ENCODE measurements at regions of chr3 and their contacts with region 1.

Region 1: DNA sequence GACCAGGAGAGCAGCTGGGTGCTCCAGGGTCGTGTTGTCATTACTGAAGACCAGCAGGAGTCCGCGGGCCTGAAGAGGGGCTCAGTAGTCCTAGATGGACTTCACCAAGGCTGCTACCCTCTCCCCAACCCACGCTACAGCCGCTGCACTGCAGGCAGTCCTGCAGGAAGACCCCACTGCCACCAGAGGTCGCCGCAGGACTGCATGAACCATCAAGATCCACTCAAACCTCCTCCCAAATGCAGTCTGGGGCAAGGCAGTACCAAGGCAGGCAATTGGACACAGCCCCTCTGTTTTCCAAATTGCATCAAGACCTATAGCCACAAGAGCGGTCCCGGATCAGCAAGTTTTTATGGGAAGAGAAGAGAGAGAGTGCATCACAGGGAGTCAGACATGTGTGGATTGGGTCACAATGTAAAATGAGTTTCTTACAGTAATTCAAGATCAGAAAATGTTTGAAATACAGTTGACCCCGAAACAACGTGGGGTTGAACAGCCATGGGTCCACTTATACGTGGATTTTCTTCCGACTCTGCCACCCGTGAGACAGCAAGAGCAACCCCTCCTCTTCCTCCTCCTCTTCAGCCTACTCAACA is 46.7 kb downstream of the DZIP1L start:
- DNase-seq: peak; percentile 47 to 53
- ATAC-seq: peak; percentile 77 to 85
- H3K4me3 ChIP-seq: no peak overlapping the region
- H3K27ac ChIP-seq: no peak overlapping the region
- H3K4me1 ChIP-seq: no peaks in the 10 kb centered on the region
- H3K27me3 ChIP-seq: no peaks in the 10 kb centered on the region
- CTCF ChIP-seq: peak; percentile 84 to 94 (median 91)
- POLR2A ChIP-seq: no peak

Region 2: GRCh38 chr3:138118612-138119422 is 50.1 kb after region 1 on chr3:
- in situ Hi-C with region 1: loop called (anchors 5 to 10 kb)
- intact Hi-C with region 1: loop called (anchors 1 kb)
- DNase-seq: peak; percentile 35 to 62
- ATAC-seq: peak; percentile 63 to 74
- H3K4me3 ChIP-seq: no peak overlapping the region
- H3K27ac ChIP-seq: no peak overlapping the region
- H3K4me1 ChIP-seq: peaks cover 0 to 19% of the 10 kb centered on the region in 2 donors
- H3K27me3 ChIP-seq: no peaks in the 10 kb centered on the region
- CTCF ChIP-seq: peak; percentile 47 to 79 (median 65)
- POLR2A ChIP-seq: no peak

Measured in gastrocnemius medialis (tissue), 4 donors.